MCF 10A (cell line): ENCODE measurements at regions of chr14 and their contacts with region 1.

Region 1: GRCh38 chr14:60622917-60623257 is 26.4 kb downstream of the SIX1 start:
- DNase-seq: peak; percentile 0
- H3K4me3 Mint-ChIP-seq: no peak overlapping the region
- H3K27ac Mint-ChIP-seq: no peak overlapping the region
- H3K4me1 Mint-ChIP-seq: no peaks in the 10 kb centered on the region
- H3K27me3 Mint-ChIP-seq: no peaks in the 10 kb centered on the region
- CTCF ChIP-seq: no peak

Region 2: GRCh38 chr14:60602291-60602690 is 20.6 kb before region 1 on chr14:
- CTCF ChIA-PET with region 1: interaction called, 17 read pairs
- POLR2A ChIA-PET with region 1: interaction called, 3 read pairs
- intact Hi-C with region 1: no loop called
- DNase-seq: no peak
- H3K4me3 Mint-ChIP-seq: no peak overlapping the region
- H3K27ac Mint-ChIP-seq: no peak overlapping the region
- H3K4me1 Mint-ChIP-seq: no peaks in the 10 kb centered on the region
- H3K27me3 Mint-ChIP-seq: peaks cover 22% of the 10 kb centered on the region
- CTCF ChIP-seq: no peak

Region 3: DNA sequence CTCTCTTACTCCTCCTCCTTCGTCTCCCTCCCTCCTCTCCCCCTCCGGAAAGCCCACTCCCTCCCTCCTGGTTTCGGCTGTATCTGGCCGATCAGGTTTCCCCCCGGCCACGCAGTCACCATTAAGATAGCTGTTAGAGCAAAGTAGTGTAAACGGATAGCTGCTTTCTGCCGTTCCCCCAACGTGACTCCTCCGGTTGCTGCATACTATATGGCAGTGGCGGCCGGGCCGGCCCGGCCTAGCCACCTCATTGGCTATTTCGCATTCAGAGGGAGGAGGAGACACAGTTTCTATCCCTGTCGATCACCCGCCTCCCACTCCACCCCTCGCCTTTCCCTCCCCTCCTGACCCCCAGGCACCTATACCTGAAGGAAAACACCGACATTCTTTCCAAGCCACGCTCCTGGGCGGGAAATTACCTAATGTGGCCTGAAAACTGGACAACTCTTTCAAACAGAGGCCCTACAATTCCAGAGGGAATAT is 101.3 kb after region 1 on chr14 and contains the start of gene SIX4:
- CTCF ChIA-PET with region 1: interaction called, 3 read pairs
- POLR2A ChIA-PET with region 1: no interaction called
- intact Hi-C with region 1: loop called (anchors 2 kb)
- DNase-seq: peak; percentile 89
- H3K4me3 Mint-ChIP-seq: peak within 1 kb of the TSS; percentile 91
- H3K27ac Mint-ChIP-seq: peak within 1 kb of the TSS; percentile 80
- H3K4me1 Mint-ChIP-seq: no peaks in the 10 kb centered on the region
- H3K27me3 Mint-ChIP-seq: no peaks in the 10 kb centered on the region
- CTCF ChIP-seq: no peak
- total RNA-seq, gene SIX4: 12.9 and 13.6 TPM in 2 replicates

Region 4: DNA sequence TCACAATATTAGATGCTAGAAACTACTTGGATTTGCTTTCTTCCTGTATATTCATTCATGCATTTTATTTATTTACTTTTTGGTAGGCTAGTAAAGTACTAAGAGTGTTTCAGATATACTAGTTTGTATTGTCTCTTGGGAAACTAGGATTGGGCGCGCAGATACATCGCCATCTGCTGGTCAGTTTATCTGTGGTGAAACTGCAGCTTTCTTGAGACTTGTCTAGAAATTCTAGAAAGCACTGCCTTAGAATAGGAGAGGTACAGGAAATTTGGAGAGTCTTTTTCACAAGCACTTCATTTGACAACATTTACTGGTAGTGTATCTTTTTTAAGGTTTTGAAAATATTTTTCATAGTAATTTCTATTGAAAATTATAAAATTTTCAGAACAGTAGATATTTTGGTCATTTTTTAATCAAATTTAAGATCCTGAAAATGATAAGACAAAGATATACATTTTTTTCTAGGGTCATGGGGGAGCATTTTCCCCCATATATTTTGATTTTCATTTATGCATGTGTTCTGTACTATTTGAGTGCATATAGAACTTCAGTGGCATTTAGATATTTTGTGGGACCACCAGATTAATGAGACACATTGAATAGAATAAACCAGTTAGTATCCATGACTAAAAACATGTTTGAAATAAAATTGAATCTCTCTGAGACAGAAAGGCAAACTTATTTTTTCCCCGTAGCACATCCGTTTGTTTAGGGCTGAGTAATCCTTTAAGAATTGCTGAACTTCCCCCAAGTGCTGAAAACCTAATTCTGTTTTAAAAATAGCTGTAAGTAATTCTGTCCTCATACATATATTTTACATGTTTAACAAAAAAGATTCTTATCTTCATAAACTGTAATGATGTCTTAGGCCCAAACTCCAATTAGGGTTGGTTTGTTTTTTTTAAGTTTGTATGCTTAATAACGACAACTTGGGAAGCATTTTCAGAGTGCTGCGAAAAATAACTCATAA is 402.6 kb after region 1 on chr14:
- CTCF ChIA-PET with region 1: interaction called, 27 read pairs
- POLR2A ChIA-PET with region 1: no interaction called
- intact Hi-C with region 1: loop called (anchors 1 kb)
- DNase-seq: peak; percentile 77
- H3K4me3 Mint-ChIP-seq: no peak overlapping the region
- H3K27ac Mint-ChIP-seq: no peak overlapping the region
- H3K4me1 Mint-ChIP-seq: peaks cover 5% of the 10 kb centered on the region
- H3K27me3 Mint-ChIP-seq: no peaks in the 10 kb centered on the region
- CTCF ChIP-seq: peak; percentile 76

Region 5: DNA sequence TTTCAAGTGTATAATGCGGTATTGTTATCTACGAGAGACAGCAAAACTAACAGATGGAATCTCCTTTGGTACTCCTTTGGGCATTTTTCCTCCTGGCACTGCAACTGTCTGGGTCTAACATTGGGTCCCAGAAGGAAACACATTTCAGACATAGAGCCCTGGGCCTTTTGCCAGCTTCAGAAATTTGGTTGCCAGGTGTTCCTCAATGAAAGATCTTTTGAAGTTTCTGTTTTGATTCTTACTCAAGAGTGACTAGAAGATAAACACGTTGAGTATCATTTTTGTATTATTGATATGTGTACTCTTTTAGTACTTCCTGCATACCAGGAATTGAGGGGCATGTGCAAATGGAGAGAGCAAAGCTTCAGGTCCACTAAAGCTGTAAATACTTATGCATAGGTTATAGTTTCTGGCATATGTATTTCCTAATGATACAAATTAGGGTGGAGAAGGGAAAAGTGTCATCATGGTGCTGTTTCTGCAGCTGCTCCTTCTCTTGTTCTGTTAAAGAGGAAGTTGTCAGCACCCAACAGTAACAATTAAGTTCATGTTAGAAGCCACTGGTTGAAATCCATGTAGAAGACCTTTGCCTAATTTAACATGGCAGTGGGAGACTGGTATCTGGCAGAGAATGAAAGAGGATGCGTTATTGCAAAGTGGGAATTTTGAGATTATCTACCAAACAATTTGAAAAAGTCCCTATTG is 411.7 kb after region 1 on chr14:
- CTCF ChIA-PET with region 1: interaction called, 14 read pairs
- POLR2A ChIA-PET with region 1: no interaction called
- intact Hi-C with region 1: no loop called
- DNase-seq: peak; percentile 8
- H3K4me3 Mint-ChIP-seq: no peak overlapping the region
- H3K27ac Mint-ChIP-seq: peak overlapping the region; percentile 71
- H3K4me1 Mint-ChIP-seq: peaks cover 9% of the 10 kb centered on the region
- H3K27me3 Mint-ChIP-seq: no peaks in the 10 kb centered on the region
- CTCF ChIP-seq: no peak

Region 6: GRCh38 chr14:61196792-61197191 is 573.9 kb after region 1 on chr14:
- CTCF ChIA-PET with region 1: interaction called, 6 read pairs
- POLR2A ChIA-PET with region 1: no interaction called
- intact Hi-C with region 1: loop called (anchors 1 kb)
- DNase-seq: peak; percentile 59
- H3K4me3 Mint-ChIP-seq: no peak overlapping the region
- H3K27ac Mint-ChIP-seq: no peak overlapping the region
- H3K4me1 Mint-ChIP-seq: no peaks in the 10 kb centered on the region
- H3K27me3 Mint-ChIP-seq: no peaks in the 10 kb centered on the region
- CTCF ChIP-seq: peak; percentile 40

Region 7: GRCh38 chr14:61281186-61281947 is 658.5 kb after region 1 on chr14 and contains the start of gene TMEM30B:
- CTCF ChIA-PET with region 1: interaction called, 6 read pairs
- POLR2A ChIA-PET with region 1: no interaction called
- intact Hi-C with region 1: loop called (anchors 1 kb)
- DNase-seq: no peak
- H3K4me3 Mint-ChIP-seq: peak within 1 kb of the TSS; percentile 45
- H3K27ac Mint-ChIP-seq: no peak within 1 kb of the TSS
- H3K4me1 Mint-ChIP-seq: no peaks in the 10 kb centered on the region
- H3K27me3 Mint-ChIP-seq: no peaks in the 10 kb centered on the region
- CTCF ChIP-seq: no peak
- total RNA-seq, gene TMEM30B: 0.09 and 0.22 TPM in 2 replicates